ENCODE measurements at regions of chr17 and their contacts with region 1.

Region 1: GRCh38 chr17:42120770-42121769 is at the start of gene KAT2A:
- DNase-seq: peak in 1 of 2 donors; percentile 87
- H3K4me3 ChIP-seq: peak within 1 kb of the TSS; percentile 87 to 98
- H3K27ac ChIP-seq: no peak within 1 kb of the TSS
- H3K4me1 ChIP-seq: peaks cover 0 to 16% of the 10 kb centered on the region in 2 donors
- H3K27me3 ChIP-seq: no peaks in the 10 kb centered on the region
- CTCF ChIP-seq: no peak
- total RNA-seq, gene KAT2A: 94.3 TPM

Region 2: DNA sequence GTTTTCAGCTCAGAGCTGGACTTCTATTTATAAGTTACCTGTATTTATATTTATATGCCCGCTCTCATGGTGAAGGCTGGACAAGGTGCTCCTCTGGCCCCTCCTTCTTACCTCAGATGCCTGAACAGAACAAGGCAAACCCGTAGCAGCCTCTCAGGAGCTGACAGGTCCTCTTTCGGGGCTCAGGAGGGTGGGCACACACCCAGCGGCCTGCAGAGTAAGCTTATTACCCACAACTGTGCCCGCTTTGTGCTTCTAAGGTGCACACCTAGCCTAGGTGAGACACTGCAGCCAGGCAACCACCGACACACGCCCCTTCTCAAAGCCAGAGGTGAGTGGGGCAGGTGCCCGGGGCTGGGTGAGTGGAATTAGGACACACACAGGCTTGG is 95.9 kb before region 1 on chr17:
- intact Hi-C with region 1: loop called (anchors 1 kb)
- DNase-seq: no peak
- H3K4me3 ChIP-seq: no peak overlapping the region
- H3K27ac ChIP-seq: peak overlapping the region in 1 of 2 donors; percentile 0
- H3K4me1 ChIP-seq: peaks cover 3 to 17% of the 10 kb centered on the region in 2 donors
- H3K27me3 ChIP-seq: no peaks in the 10 kb centered on the region
- CTCF ChIP-seq: no peak

Region 3: DNA sequence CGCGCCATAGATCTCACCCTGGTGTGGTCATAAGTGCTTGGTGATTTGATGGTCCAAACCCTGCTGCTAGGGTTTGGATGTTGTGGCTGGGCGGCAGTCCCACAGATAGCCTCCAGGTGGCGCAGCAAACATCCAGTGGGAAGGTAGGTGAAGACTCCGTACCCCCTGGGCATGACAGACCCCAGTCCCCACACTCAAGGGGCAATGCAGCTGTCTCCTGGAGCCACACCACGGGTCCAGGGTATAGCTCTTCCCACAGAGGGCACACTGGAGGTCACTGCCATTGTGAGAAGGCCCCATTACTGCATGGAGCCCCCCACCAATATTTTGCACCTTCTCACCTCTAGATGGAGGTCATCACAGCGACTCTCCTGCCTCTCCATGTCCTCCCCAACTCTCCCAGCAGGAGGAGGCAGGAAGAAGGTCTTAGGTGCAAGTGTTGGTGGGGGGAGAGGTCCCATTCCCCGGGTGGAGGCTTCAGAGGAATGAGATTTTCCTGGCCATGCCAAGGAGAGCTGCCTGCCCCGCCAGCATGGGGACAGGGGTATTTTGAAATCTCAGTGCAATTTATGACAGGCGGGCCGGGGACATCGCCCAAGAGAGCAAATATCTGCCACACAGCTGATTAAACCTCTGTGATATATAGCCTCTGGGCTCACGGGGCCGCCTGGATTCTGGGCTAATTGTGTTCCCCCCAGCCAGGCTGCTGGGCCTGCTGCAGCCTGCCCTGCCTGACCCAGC is 53.5 kb before region 1 on chr17:
- intact Hi-C with region 1: loop called (anchors 1 kb)
- DNase-seq: peak in 1 of 2 donors; percentile 73
- H3K4me3 ChIP-seq: no peak overlapping the region
- H3K27ac ChIP-seq: no peak overlapping the region
- H3K4me1 ChIP-seq: peaks cover 0 to 3% of the 10 kb centered on the region in 2 donors
- H3K27me3 ChIP-seq: no peaks in the 10 kb centered on the region
- CTCF ChIP-seq: peak; percentile 68 to 86 (median 84)

Region 4: GRCh38 chr17:42107597-42108576 is 13.2 kb before region 1 on chr17:
- intact Hi-C with region 1: no loop called
- DNase-seq: peak in 1 of 2 donors; percentile 76
- H3K4me3 ChIP-seq: no peak overlapping the region
- H3K27ac ChIP-seq: no peak overlapping the region
- H3K4me1 ChIP-seq: peaks cover 0 to 9% of the 10 kb centered on the region in 2 donors
- H3K27me3 ChIP-seq: no peaks in the 10 kb centered on the region
- CTCF ChIP-seq: no peak

Region 5: GRCh38 chr17:42155636-42156045 is 34.6 kb after region 1 on chr17:
- intact Hi-C with region 1: loop called (anchors 5 kb)
- DNase-seq: no peak
- H3K4me3 ChIP-seq: peak overlapping the region; percentile 92 to 96
- H3K27ac ChIP-seq: no peak overlapping the region
- H3K4me1 ChIP-seq: peaks cover 8 to 22% of the 10 kb centered on the region in 2 donors
- H3K27me3 ChIP-seq: no peaks in the 10 kb centered on the region
- CTCF ChIP-seq: no peak

Region 6: GRCh38 chr17:42566883-42567573 is 446.0 kb after region 1 on chr17 and contains the start of gene MLX:
- intact Hi-C with region 1: no loop called
- DNase-seq: peak; percentile 71 to 97
- H3K4me3 ChIP-seq: peak within 1 kb of the TSS; percentile 70 to 82
- H3K27ac ChIP-seq: peak within 1 kb of the TSS; percentile 89 to 97
- H3K4me1 ChIP-seq: peaks cover 5 to 31% of the 10 kb centered on the region in 2 donors
- H3K27me3 ChIP-seq: no peaks in the 10 kb centered on the region
- CTCF ChIP-seq: no peak
- total RNA-seq, gene MLX: 15.8 TPM